ENCODE measurements at regions of chr21 and their contacts with region 1.

Region 1: GRCh38 chr21:32727687-32728455 is at the start of gene SYNJ1:
- DNase-seq: peak; percentile 94
- H3K4me3 ChIP-seq: peak within 1 kb of the TSS; percentile 93 to 99 (median 95)
- H3K27ac ChIP-seq: peak within 1 kb of the TSS; percentile 50
- H3K4me1 ChIP-seq: peaks cover 10% of the 10 kb centered on the region
- H3K27me3 ChIP-seq: no peaks in the 10 kb centered on the region
- CTCF ChIP-seq: no peak
- total RNA-seq, gene SYNJ1: 5.5 to 11.3 TPM

Region 2: DNA sequence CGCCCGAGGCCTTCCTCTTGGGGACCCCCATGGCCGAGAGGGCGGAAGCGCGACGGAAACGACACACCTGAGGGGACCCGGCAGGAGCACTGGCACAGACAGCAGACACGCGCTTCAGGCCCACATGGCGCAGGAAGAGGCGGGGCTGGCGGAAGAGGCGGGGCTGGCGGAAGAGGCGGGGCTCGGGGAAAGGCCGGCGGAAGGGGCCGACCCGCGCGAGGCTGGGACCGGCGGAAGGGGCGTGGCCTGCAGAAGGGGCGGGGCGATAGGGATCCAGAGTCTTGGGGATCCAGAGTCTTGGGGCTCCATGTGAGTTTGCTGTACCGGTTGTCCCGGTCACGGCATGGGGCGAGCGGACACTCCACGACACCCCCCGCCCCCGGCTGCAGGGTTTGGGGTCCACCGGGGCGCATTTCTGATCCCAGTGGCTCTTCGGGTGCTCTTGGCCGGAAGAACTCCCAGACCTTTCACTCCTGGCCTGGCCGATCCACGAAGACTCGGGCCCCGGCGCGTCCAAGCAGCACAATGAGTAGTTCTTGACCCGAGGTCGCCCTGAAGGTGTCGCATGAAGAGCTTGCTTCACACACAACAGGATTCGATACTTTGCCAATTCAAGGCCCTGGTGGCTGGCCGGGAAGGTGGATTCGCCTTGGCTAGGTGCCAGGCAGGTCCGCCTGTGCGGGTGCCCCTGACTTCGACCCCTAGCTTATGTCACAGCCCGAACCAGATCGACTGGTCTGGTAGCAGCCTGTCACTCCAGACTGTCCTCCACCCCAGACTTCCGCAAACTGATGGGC is 334.8 kb before region 1 on chr21 and contains the start of gene URB1:
- CTCF ChIA-PET with region 1: no interaction called
- dilution Hi-C with region 1: no loop called
- in situ Hi-C with region 1: loop called in 1 of 2 experiments (anchors 25 kb)
- intact Hi-C with region 1: no loop called
- DNase-seq: peak; percentile 80
- H3K4me3 ChIP-seq: peak within 1 kb of the TSS; percentile 87 to 97 (median 94)
- H3K27ac ChIP-seq: peak within 1 kb of the TSS; percentile 57
- H3K4me1 ChIP-seq: peaks cover 28% of the 10 kb centered on the region
- H3K27me3 ChIP-seq: no peaks in the 10 kb centered on the region
- CTCF ChIP-seq: peak in 1 of 2 donors; percentile 1
- total RNA-seq, gene URB1: 32.2 to 36.4 TPM

Region 3: DNA sequence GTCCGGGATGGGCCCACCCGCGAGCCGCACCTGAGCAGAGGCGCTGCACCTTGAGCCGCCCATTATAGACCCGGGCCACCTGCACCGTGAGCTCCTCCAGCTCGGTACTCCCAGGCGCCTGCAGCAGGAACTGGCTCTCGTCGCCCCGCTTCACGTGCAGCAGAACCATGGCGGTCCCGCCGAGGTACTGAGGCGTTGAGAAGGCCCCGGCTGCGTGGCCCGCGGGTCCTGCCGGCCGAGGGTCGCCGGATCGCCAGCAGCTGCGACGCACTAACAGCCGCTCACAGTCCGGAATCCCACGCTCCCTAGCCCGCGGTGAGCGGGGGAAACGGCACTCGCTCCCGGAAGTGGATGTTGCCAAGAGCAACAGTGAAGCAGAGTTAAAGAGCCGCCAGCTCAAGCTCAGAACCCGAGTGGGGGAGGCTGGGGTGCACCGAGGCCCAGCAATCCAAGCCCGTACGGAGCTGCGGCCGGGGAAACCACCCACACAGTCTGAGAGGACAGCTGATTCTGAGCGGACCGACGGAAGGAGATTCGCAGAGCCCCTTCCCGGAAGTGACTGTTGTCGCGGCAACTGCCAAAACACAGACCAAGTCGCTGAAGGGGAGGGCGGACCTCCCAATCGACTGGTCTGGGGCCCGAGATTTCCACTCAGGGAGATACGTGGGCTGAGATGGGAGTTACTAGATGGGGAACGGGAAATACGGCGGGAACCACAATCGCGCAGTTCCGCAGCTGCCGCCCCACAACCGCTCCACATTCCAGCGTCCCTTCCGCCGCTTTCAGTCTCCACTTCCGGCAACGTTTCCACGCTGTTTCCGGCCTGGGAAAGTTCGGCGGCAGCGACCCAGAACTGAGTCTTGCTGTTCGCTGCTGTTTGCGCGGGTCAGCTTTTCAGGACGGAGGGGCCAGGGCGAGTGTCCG is 115.5 kb before region 1 on chr21 and contains the start of gene CFAP298:
- CTCF ChIA-PET with region 1: no interaction called
- dilution Hi-C with region 1: no loop called
- in situ Hi-C with region 1: no loop called
- intact Hi-C with region 1: loop called (anchors 1 kb)
- DNase-seq: peak; percentile 94
- H3K4me3 ChIP-seq: peak within 1 kb of the TSS; percentile 84 to 99 (median 99)
- H3K27ac ChIP-seq: peak within 1 kb of the TSS; percentile 98
- H3K4me1 ChIP-seq: peaks cover 2% of the 10 kb centered on the region
- H3K27me3 ChIP-seq: no peaks in the 10 kb centered on the region
- CTCF ChIP-seq: no peak
- total RNA-seq, gene CFAP298: 15.3 to 48.9 TPM

Region 4: GRCh38 chr21:32770871-32771523 is 43.1 kb after region 1 on chr21:
- CTCF ChIA-PET with region 1: interaction called, 15 read pairs
- dilution Hi-C with region 1: loop called (anchors 10 kb)
- in situ Hi-C with region 1: no loop called
- intact Hi-C with region 1: loop called (anchors 1 kb)
- DNase-seq: peak; percentile 62
- H3K4me3 ChIP-seq: peak overlapping the region; percentile 59 to 84 (median 73)
- H3K27ac ChIP-seq: peak overlapping the region; percentile 67
- H3K4me1 ChIP-seq: peaks cover 10% of the 10 kb centered on the region
- H3K27me3 ChIP-seq: no peaks in the 10 kb centered on the region
- CTCF ChIP-seq: peak in 1 of 2 donors; percentile 10

Region 5: DNA sequence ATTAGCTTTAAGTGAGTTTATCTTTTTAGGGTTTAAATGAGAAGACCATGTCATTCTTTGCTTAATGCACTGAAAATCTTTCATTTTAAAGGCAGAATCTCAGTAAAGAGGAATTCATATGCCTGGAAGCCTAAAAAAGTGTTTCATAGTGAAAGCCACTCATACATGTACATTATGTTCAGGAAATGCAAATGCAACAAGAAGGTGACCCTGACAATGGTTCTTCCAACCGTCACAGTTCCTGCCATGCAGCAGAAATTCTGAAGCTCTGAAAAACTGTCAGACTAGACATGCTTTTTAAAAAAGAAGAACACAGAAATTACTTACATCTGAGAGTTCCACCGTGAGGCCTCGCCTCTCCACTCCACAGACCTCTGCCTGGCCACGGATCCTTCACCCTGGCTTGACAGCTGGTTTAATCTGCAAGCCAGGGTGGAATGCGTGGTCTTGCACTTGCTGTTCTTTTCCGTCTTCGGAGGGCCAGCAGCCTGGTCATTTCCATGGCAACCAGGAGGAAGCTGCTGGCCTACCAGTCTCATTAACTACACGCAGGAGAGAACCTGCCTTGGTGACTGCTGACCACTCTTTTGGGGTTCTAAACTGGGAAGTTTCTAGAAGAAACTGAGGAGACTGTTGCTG is 85.5 kb after region 1 on chr21:
- CTCF ChIA-PET with region 1: no interaction called
- dilution Hi-C with region 1: loop called (anchors 5 kb)
- in situ Hi-C with region 1: no loop called
- intact Hi-C with region 1: no loop called
- DNase-seq: no peak
- H3K4me3 ChIP-seq: no peak overlapping the region
- H3K27ac ChIP-seq: no peak overlapping the region
- H3K4me1 ChIP-seq: no peaks in the 10 kb centered on the region
- H3K27me3 ChIP-seq: peaks cover 1% of the 10 kb centered on the region
- CTCF ChIP-seq: no peak

Region 6: GRCh38 chr21:32900814-32901213 is 172.9 kb after region 1 on chr21:
- CTCF ChIA-PET with region 1: no interaction called
- dilution Hi-C with region 1: no loop called
- in situ Hi-C with region 1: no loop called
- intact Hi-C with region 1: no loop called
- DNase-seq: no peak
- H3K4me3 ChIP-seq: no peak overlapping the region
- H3K27ac ChIP-seq: no peak overlapping the region
- H3K4me1 ChIP-seq: no peaks in the 10 kb centered on the region
- H3K27me3 ChIP-seq: peaks cover 2% of the 10 kb centered on the region
- CTCF ChIP-seq: no peak